ENCODE measurements at regions of chr4 and their contacts with region 1.

Region 1: GRCh38 chr4:127782274-127783025 is at the start of gene HSPA4L:
- DNase-seq: peak in 8 of 9 donors; percentile 7 to 77 (median 22)
- ATAC-seq: peak; percentile 81
- H3K4me3 ChIP-seq: peak within 1 kb of the TSS; percentile 66
- H3K4me3 Mint-ChIP-seq: peak within 1 kb of the TSS; percentile 86 to 96 (median 91)
- H3K27ac ChIP-seq: no peak within 1 kb of the TSS
- H3K27ac Mint-ChIP-seq: peak within 1 kb of the TSS in 5 of 9 donors; percentile 7 to 86 (median 49)
- H3K4me1 ChIP-seq: peaks cover 0 to 6% of the 10 kb centered on the region in 2 donors
- H3K4me1 Mint-ChIP-seq: peaks cover 13 to 20% (median 18%) of the 10 kb centered on the region in 7 donors
- H3K27me3 ChIP-seq: peaks cover 20 to 21% of the 10 kb centered on the region in 2 donors
- H3K27me3 Mint-ChIP-seq: peaks cover 64 to 78% (median 67%) of the 10 kb centered on the region in 5 donors
- total RNA-seq, gene HSPA4L: 1.1 TPM in 1 of 5 experiments, not detected in the others

Region 2: DNA sequence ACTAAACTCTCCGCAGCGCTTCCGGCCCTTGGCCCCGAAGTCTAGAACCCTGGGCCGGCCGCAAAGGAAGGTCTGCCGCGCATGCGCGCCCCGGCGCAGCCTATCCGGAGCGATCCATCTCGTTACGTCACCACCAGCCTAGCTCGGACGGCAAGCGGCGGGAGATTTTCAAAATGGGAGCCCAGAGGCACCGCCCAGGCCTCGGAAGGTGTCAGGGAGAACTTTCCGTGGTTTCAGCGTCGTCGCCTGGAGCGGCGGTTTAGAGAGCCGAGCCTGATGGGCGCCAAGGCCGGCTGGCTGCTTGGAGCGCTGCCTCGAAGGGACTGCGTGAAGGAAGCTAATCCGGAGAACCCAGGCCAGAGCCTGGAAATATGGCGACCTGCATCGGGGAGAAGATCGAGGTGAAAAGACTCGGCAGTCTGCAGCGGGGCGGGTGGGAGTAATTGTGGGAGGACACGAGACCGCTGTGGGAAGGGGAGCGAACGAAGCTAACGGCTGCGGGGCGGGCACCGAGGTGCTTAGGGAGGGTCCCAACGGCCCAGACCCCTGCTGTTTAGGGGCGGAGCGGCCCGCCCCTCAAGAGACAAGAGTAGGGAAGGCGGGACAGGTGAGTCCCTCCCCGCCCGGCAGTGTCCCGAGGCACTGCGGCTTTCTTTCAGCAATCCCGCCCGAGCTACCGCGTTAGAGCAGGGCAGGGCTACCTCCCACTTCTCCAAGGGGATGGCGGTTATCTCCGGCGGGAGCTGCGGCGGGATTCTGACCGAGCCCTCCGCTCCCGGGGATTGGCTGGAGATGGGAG is 98.5 kb after region 1 on chr4 and contains the start of gene PLK4:
- CTCF ChIA-PET with region 1: no interaction called
- POLR2A ChIA-PET with region 1: no interaction called
- intact Hi-C with region 1: loop called in 1 of 2 experiments (anchors 2 kb)
- DNase-seq: peak; percentile 91 to 96 (median 95)
- ATAC-seq: peak; percentile 97
- H3K4me3 ChIP-seq: peak within 1 kb of the TSS; percentile 93
- H3K4me3 Mint-ChIP-seq: peak within 1 kb of the TSS; percentile 90 to 99 (median 97)
- H3K27ac ChIP-seq: peak within 1 kb of the TSS; percentile 75
- H3K27ac Mint-ChIP-seq: peak within 1 kb of the TSS; percentile 95 to 99 (median 99)
- H3K4me1 ChIP-seq: peaks cover 4 to 10% of the 10 kb centered on the region in 2 donors
- H3K4me1 Mint-ChIP-seq: peaks cover 4 to 37% (median 28%) of the 10 kb centered on the region in 7 donors
- H3K27me3 ChIP-seq: no peaks in the 10 kb centered on the region
- H3K27me3 Mint-ChIP-seq: peaks cover 0 to 3% (median 0%) of the 10 kb centered on the region in 5 donors
- total RNA-seq, gene PLK4: 3.4 to 34.7 (median 3.9) TPM

Region 3: GRCh38 chr4:128333309-128334018 is 551.0 kb after region 1 on chr4:
- CTCF ChIA-PET with region 1: no interaction called
- POLR2A ChIA-PET with region 1: no interaction called
- intact Hi-C with region 1: no loop called
- DNase-seq: no peak
- ATAC-seq: no peak
- H3K4me3 ChIP-seq: no peak overlapping the region
- H3K4me3 Mint-ChIP-seq: no peak overlapping the region
- H3K27ac ChIP-seq: no peak overlapping the region
- H3K27ac Mint-ChIP-seq: no peak overlapping the region
- H3K4me1 ChIP-seq: no peaks in the 10 kb centered on the region
- H3K4me1 Mint-ChIP-seq: peaks cover 0 to 1% (median 0%) of the 10 kb centered on the region in 7 donors
- H3K27me3 ChIP-seq: no peaks in the 10 kb centered on the region
- H3K27me3 Mint-ChIP-seq: no peaks in the 10 kb centered on the region

Measured in naive thymus-derived CD4-positive, alpha-beta T cell (primary cell).